K562 (cell line): ENCODE measurements at regions of chr17 and their contacts with region 1.

Region 1: GRCh38 chr17:6640536-6641373 is at the starts of genes KIAA0753 and TXNDC17:
- DNase-seq: peak; percentile 72 to 91 (median 79)
- ATAC-seq: peak; percentile 91
- H3K4me3 ChIP-seq: peak within 1 kb of the TSS; percentile 68
- H3K27ac ChIP-seq: peak within 1 kb of the TSS; percentile 86
- H3K4me1 ChIP-seq: peaks cover 8 to 43% of the 10 kb centered on the region in 2 experiments; a peak in 4 of 5 replicates
- H3K27me3 ChIP-seq: no peaks in the 10 kb centered on the region
- CTCF ChIP-seq: no peak
- EP300 ChIP-seq: no peak
- POLR2A ChIP-seq: peak; percentile 94
- RAD21 ChIP-seq: no peak
- polyA plus RNA-seq, gene KIAA0753: 2.0 to 3.4 TPM
- polyA plus RNA-seq, gene TXNDC17: 758 to 759 TPM

Region 2: GRCh38 chr17:5281814-5282653 is 1358.7 kb before region 1 on chr17 and contains the start of gene RABEP1:
- CTCF ChIA-PET with region 1: no interaction called
- POLR2A ChIA-PET with region 1: no interaction called
- in situ Hi-C with region 1: no loop called
- intact Hi-C with region 1: loop called (anchors 10 kb)
- DNase-seq: peak; percentile 89 to 93 (median 92)
- ATAC-seq: peak; percentile 84
- H3K4me3 ChIP-seq: peak within 1 kb of the TSS; percentile 80
- H3K27ac ChIP-seq: peak within 1 kb of the TSS; percentile 78
- H3K4me1 ChIP-seq: peaks cover 4 to 16% of the 10 kb centered on the region in 2 experiments; a peak in 2 of 5 replicates
- H3K27me3 ChIP-seq: peaks cover 0 to 5% of the 10 kb centered on the region in 2 experiments; a peak in 2 of 5 replicates
- CTCF ChIP-seq: 0 out of 6 replicates have a peak, but pooled peaks of 1 of the 3 experiments have one; percentile 17
- EP300 ChIP-seq: no peak
- POLR2A ChIP-seq: peak; percentile 69
- RAD21 ChIP-seq: no peak
- polyA plus RNA-seq, gene RABEP1: 8.2 to 11.5 TPM

Region 3: DNA sequence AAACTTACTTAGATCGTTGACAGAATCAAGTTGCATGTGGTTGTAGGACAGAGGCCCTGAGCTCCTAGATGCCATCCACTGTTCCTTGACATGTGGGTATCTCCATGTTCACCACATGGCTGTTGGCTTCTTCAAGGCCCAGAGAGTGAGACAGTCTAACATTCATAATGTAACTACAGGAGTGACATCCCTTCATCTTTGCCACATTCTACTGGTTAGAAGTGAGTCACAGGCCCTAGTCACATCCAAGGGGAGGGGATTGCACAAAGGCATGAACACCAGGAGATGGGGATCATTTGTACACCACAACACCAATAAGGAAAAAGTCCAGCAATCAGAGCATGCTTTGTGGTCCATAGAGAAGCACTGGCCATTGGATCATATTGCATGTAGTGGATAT is 514.0 kb before region 1 on chr17:
- CTCF ChIA-PET with region 1: no interaction called
- POLR2A ChIA-PET with region 1: no interaction called
- in situ Hi-C with region 1: no loop called
- intact Hi-C with region 1: no loop called
- DNase-seq: no peak
- ATAC-seq: no peak
- H3K4me3 ChIP-seq: no peak overlapping the region
- H3K27ac ChIP-seq: no peak overlapping the region
- H3K4me1 ChIP-seq: no peaks in the 10 kb centered on the region
- H3K27me3 ChIP-seq: no peaks in the 10 kb centered on the region; a peak in 1 of 5 replicates
- CTCF ChIP-seq: no peak
- EP300 ChIP-seq: no peak
- POLR2A ChIP-seq: no peak
- RAD21 ChIP-seq: no peak

Region 4: DNA sequence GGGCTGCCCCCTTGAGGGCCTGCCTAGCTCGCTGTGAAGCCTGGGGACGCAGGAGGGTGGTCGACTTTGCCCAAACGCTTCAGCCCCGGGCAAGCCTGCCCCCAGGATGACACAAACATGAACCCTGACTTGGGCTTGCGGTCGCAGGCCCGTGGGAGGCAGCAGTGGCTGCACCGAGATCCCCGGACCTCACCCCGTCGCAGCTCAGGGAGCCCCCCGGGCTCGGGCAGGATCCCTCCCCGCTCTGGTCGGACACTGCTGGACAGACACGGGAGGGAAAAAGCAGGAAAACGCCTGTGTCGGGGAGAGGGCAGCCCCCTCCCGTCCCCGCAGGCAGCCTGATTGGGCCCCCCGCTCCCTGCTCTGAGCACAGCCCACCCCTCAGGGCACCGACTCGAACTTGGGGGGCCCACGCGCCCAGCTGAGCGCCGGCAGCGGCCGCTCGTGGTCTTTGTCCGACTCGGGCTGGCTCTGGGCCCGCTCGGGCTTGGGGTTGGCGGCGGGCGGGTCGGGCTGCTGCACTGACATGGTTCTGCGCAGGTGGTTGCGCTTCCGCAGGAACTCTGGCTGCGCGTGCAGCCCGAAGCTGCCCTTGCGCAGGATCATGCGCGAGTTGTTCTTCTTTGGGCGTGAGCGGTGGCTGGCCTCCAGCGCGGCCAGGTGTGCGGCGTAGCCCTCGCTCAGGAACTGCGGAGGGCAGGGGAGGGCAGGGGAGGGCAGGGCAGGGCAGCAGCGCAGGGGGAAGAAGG is 185.6 kb before region 1 on chr17:
- CTCF ChIA-PET with region 1: no interaction called
- POLR2A ChIA-PET with region 1: no interaction called
- in situ Hi-C with region 1: no loop called
- intact Hi-C with region 1: loop called (anchors 10 kb)
- DNase-seq: no peak
- ATAC-seq: no peak
- H3K4me3 ChIP-seq: no peak overlapping the region
- H3K27ac ChIP-seq: no peak overlapping the region
- H3K4me1 ChIP-seq: peaks cover 24 to 37% of the 10 kb centered on the region in 2 experiments
- H3K27me3 ChIP-seq: no peaks in the 10 kb centered on the region
- CTCF ChIP-seq: no peak
- EP300 ChIP-seq: no peak
- POLR2A ChIP-seq: no peak
- RAD21 ChIP-seq: no peak

Region 5: DNA sequence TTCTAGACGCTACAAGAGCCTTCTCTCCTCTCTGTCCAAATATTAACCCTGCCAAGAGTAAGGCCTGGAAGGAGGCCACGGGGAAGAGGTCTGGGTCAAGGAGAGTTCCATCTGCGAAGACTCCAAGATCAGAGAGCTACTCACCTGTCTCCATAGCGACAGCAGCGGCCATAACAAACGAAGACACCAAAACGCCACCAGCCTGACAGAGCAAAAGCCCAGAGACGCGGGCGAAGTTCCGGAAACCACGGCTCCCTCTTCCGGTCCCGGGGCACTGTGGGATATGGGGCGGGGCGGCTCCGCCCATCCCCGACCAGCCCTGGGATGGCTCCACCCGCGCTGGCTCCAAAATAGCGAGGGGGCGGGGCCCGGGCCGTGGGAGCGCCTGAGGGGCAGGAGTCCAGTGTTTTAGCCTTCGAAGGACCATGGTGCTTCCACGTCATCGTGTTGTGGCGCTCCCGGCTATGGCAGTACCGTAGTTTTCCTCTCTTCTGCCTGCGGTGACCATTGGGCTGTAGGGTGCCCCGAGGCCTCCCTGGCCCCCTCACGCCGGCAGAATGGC is 10.7 kb after region 1 on chr17 and contains the starts of genes C17orf100 and MED31:
- CTCF ChIA-PET with region 1: no interaction called
- POLR2A ChIA-PET with region 1: interaction called, 13 read pairs
- in situ Hi-C with region 1: no loop called
- intact Hi-C with region 1: no loop called
- DNase-seq: peak; percentile 92 to 98 (median 96)
- ATAC-seq: peak; percentile 100
- H3K4me3 ChIP-seq: peak within 1 kb of the TSS; percentile 61
- H3K27ac ChIP-seq: peak within 1 kb of the TSS; percentile 96
- H3K4me1 ChIP-seq: peaks cover 14 to 16% of the 10 kb centered on the region in 2 experiments; a peak in 4 of 5 replicates
- H3K27me3 ChIP-seq: peaks cover 0 to 7% of the 10 kb centered on the region in 2 experiments; a peak in 2 of 5 replicates
- CTCF ChIP-seq: no peak
- EP300 ChIP-seq: no peak
- POLR2A ChIP-seq: peak; percentile 78
- RAD21 ChIP-seq: no peak
- polyA plus RNA-seq, gene C17orf100: 0.04 to 0.11 TPM
- polyA plus RNA-seq, gene MED31: 35.7 to 39.9 TPM